ENCODE measurements at regions of chr1 and their contacts with region 1.

Region 1: DNA sequence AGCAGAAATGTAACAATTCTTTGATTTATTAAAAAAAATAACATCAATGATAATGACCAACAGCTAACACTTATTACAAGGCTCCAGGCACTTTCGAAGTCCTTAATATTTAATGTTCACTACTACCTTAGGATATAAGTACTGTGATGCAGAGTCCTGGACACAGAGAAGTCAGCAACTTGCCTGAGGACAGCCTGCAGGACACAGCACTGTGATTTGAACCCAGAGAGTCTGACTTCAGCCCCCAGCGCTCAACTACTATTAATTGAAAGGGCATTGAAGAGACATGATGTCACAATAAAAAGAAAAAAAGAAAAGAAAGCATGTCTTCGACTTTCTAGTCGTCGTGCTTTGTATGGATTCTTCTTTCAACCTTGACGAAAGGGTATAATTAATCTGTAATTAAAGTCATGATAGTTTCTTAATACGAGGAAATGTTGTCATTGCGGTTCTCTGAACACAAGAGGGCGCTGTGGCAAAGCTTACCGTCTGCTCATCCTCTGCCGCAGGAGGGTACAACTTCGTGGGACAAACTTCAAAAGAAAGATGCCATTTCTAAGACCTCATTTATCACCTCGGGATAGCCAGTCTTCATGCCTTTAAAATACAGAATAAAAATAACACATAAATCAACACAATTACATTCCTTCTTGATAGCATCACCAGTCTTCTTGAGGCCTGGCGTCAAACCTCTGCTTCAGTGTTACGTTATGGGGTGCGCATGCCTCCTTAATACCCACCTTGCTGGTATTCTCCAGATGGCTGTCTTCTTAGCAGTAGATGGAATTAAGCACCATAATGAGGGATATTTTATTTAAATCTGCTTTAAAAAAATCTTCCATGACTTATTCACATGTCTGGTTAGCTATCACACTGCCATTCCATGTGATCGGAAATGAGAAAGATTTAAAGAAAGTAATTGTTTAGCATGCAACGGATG is 240.1 kb downstream of the DISC1 start:
- DNase-seq: peak; percentile 71
- H3K4me3 ChIP-seq: no peak overlapping the region
- H3K27ac ChIP-seq: no peak overlapping the region
- H3K4me1 ChIP-seq: no peaks in the 10 kb centered on the region
- H3K27me3 ChIP-seq: no peaks in the 10 kb centered on the region
- CTCF ChIP-seq: peak; percentile 73 to 77
- POLR2A ChIP-seq: no peak

Region 2: DNA sequence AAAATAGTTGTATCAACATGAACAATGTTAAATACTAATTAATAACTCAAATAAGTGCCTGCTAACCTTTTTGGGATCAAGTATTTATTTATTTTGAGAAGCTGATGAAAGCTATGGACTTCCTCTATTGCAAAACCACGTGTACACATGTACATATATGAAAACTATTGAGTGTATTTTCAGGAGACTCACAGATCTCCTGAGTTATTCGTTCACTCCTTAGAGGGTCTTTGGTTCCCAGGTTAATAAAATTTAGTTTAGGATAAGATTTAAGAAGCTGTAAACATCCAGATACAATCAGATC is 109.6 kb before region 1 on chr1:
- CTCF ChIA-PET with region 1: interaction called, 33 read pairs
- POLR2A ChIA-PET with region 1: no interaction called
- dilution Hi-C with region 1: no loop called
- intact Hi-C with region 1: loop called (anchors 1 kb)
- DNase-seq: no peak
- H3K4me3 ChIP-seq: no peak overlapping the region
- H3K27ac ChIP-seq: no peak overlapping the region
- H3K4me1 ChIP-seq: no peaks in the 10 kb centered on the region
- H3K27me3 ChIP-seq: no peaks in the 10 kb centered on the region
- CTCF ChIP-seq: no peak
- POLR2A ChIP-seq: no peak

Region 3: GRCh38 chr1:231844986-231845502 is 21.6 kb before region 1 on chr1:
- CTCF ChIA-PET with region 1: interaction called, 10 read pairs
- POLR2A ChIA-PET with region 1: no interaction called
- dilution Hi-C with region 1: no loop called
- intact Hi-C with region 1: no loop called
- DNase-seq: peak; percentile 73
- H3K4me3 ChIP-seq: no peak overlapping the region
- H3K27ac ChIP-seq: no peak overlapping the region
- H3K4me1 ChIP-seq: peaks cover 9% of the 10 kb centered on the region
- H3K27me3 ChIP-seq: no peaks in the 10 kb centered on the region
- CTCF ChIP-seq: no peak
- POLR2A ChIP-seq: no peak

Region 4: DNA sequence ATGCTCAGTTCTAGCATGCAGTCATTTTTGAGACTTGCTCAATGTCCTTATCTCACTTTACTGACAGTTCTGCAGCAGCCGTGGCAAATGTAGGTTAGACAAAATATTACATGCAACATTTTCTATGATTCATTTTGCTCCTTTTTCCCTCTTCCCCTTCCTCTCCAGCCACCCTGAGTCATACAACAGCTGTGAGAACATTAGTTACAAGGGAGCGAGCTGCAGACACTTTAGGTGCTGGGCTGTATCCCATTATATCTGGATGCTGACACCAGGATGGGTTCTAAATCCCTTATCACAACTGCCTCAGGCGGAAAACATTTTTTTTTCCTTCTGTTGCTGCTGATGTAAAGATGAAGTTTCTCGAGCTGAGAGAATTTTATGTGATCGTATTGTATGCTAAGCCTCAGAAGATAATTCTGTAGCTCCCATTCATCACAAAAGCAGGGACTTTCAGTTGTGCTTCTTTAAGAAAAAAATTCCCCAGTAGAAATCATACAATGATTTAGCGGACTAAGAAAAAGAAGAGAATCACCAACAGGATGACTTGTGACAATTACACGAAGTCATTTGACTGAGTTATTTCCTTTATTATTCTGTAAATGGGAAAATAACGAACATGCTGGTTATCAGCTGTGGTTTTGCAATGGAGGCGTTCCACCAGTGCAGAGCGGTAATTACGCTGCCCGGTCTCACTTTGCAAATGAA is 104.9 kb after region 1 on chr1:
- CTCF ChIA-PET with region 1: interaction called, 10 read pairs
- POLR2A ChIA-PET with region 1: no interaction called
- dilution Hi-C with region 1: no loop called
- intact Hi-C with region 1: loop called (anchors 5 kb)
- DNase-seq: peak; percentile 94
- H3K4me3 ChIP-seq: peak overlapping the region in 1 of 3 experiments; percentile 46
- H3K27ac ChIP-seq: peak overlapping the region; percentile 59
- H3K4me1 ChIP-seq: peaks cover 17% of the 10 kb centered on the region
- H3K27me3 ChIP-seq: no peaks in the 10 kb centered on the region
- CTCF ChIP-seq: no peak
- POLR2A ChIP-seq: no peak

Region 5: GRCh38 chr1:231990388-231990787 is 123.7 kb after region 1 on chr1:
- CTCF ChIA-PET with region 1: interaction called, 3 read pairs
- POLR2A ChIA-PET with region 1: no interaction called
- dilution Hi-C with region 1: no loop called
- intact Hi-C with region 1: loop called (anchors 5 kb)
- DNase-seq: peak; percentile 93
- H3K4me3 ChIP-seq: no peak overlapping the region
- H3K27ac ChIP-seq: peak overlapping the region; percentile 23
- H3K4me1 ChIP-seq: peaks cover 18% of the 10 kb centered on the region
- H3K27me3 ChIP-seq: no peaks in the 10 kb centered on the region
- CTCF ChIP-seq: no peak
- POLR2A ChIP-seq: peak; percentile 65

Region 6: DNA sequence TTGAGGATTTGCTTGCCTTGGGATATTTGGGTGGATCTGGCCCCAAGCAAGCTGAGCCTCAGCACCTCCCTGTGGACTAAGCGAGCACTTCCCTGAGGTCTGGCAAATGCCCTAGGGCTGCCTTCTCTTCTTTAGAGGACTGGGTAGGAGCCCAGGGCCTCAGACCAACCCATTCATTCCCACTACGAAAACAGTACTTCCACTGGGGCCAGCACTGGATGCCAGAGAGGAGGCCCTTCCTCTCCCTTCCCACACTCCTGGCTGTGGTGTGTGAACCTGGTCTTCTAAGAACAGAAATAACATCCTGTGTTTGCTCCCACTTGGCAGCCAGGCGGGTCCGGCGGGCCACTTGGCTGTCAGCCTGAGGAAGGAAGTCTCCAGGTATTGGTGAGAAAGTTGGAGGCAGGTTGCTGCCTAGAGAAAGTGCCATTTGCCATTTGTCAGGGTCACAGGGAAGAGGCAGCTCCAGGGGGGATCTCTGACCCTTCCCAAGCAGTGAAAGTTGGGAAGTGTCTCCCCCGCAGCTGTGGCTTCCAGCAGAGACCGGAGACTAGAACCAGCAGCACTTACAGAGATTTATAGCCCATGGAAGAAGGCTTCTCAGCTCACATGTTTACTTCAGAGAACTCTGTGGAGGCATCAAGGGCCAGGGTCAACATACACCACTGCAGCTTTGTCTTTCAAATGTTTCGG is 439.8 kb after region 1 on chr1:
- CTCF ChIA-PET with region 1: no interaction called
- POLR2A ChIA-PET with region 1: no interaction called
- dilution Hi-C with region 1: no loop called
- intact Hi-C with region 1: loop called (anchors 5 kb)
- DNase-seq: peak; percentile 77
- H3K4me3 ChIP-seq: no peak overlapping the region
- H3K27ac ChIP-seq: no peak overlapping the region
- H3K4me1 ChIP-seq: no peaks in the 10 kb centered on the region
- H3K27me3 ChIP-seq: no peaks in the 10 kb centered on the region
- CTCF ChIP-seq: peak in 1 of 2 donors; percentile 29
- POLR2A ChIP-seq: no peak

Region 7: DNA sequence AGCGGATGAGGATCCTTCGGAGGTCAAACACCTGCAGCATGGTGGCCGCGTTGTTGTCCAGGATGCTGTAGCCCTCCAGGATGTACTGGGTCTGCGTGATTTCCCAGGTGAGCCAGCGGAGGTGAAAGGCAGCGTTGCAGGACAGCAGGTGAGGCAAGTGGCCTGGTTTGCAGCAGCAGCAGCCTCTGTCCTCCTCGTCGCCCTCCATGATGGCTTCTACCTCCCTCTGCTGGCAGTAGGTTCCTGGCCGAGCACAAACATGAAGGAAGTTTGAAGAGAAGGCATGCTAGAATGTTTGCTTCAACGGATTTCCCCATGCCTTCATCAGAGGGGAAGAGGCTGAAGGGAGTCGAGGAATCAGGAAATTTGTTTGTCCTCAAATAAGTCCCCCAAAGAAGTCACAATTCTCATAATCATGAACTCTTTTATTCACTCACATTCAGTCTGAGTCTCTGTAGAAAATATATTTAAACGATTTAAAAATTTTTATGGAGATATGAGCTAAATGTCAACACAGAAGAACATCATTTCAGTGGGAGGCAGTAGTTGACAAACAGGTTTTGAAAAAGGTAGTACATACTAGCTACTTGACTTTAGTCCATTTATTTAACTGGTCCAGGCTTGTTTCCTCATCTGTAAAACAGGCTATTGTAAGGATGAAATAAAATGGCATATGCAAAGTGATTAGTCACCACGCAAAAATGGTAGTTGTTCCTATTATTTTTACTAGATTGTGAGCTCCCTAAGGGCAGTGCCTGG is 1158.7 kb after region 1 on chr1:
- CTCF ChIA-PET with region 1: interaction called, 3 read pairs
- POLR2A ChIA-PET with region 1: no interaction called
- dilution Hi-C with region 1: no loop called
- intact Hi-C with region 1: loop called (anchors 10 kb)
- DNase-seq: peak; percentile 68
- H3K4me3 ChIP-seq: no peak overlapping the region
- H3K27ac ChIP-seq: no peak overlapping the region
- H3K4me1 ChIP-seq: peaks cover 6% of the 10 kb centered on the region
- H3K27me3 ChIP-seq: no peaks in the 10 kb centered on the region
- CTCF ChIP-seq: peak; percentile 31 to 69
- POLR2A ChIP-seq: no peak